H1 (cell line): ENCODE measurements at regions of chr2 and their contacts with region 1.

Region 1: GRCh38 chr2:10832203-10832936 is 19.8 kb upstream of the PDIA6 start:
- DNase-seq: peak; percentile 70 to 96
- H3K4me3 ChIP-seq: peak overlapping the region in 2 of 4 experiments; percentile 36 to 52; a peak in 4 of 8 replicates
- H3K27ac ChIP-seq: no peak overlapping the region
- H3K4me1 ChIP-seq: peaks cover 0 to 7% (median 4%) of the 10 kb centered on the region in 4 experiments; a peak in 5 of 7 replicates
- H3K27me3 ChIP-seq: peaks cover 0 to 7% (median 4%) of the 10 kb centered on the region in 4 experiments; a peak in 3 of 7 replicates
- CTCF ChIP-seq: peak; percentile 95 to 98 (median 97)
- EP300 ChIP-seq: no peak
- POLR2A ChIP-seq: no peak
- RAD21 ChIP-seq: peak; percentile 95 to 97

Region 2: GRCh38 chr2:10798783-10799182 is 33.6 kb before region 1 on chr2:
- CTCF ChIA-PET with region 1: interaction called, 13 read pairs
- POLR2A ChIA-PET with region 1: no interaction called
- DNase-seq: no peak
- H3K4me3 ChIP-seq: no peak overlapping the region
- H3K27ac ChIP-seq: no peak overlapping the region
- H3K4me1 ChIP-seq: no peaks in the 10 kb centered on the region
- H3K27me3 ChIP-seq: no peaks in the 10 kb centered on the region
- CTCF ChIP-seq: peak in 2 of 3 experiments; percentile 29 to 40; a peak in 3 of 4 replicates
- EP300 ChIP-seq: no peak
- POLR2A ChIP-seq: no peak
- RAD21 ChIP-seq: peak in 1 of 2 experiments; percentile 16; a peak in 1 of 4 replicates

Region 3: GRCh38 chr2:10844097-10844496 is 11.7 kb after region 1 on chr2:
- CTCF ChIA-PET with region 1: interaction called, 23 read pairs
- POLR2A ChIA-PET with region 1: interaction called, 5 read pairs
- DNase-seq: peak; percentile 49 to 79
- H3K4me3 ChIP-seq: peak overlapping the region in 2 of 4 experiments; percentile 2 to 5; a peak in 1 of 8 replicates
- H3K27ac ChIP-seq: no peak overlapping the region
- H3K4me1 ChIP-seq: peaks cover 0 to 6% (median 1%) of the 10 kb centered on the region in 4 experiments; a peak in 5 of 7 replicates
- H3K27me3 ChIP-seq: no peaks in the 10 kb centered on the region
- CTCF ChIP-seq: no peak
- EP300 ChIP-seq: 0 out of 3 replicates have a peak, but pooled peaks of 1 of the 2 experiments have one; percentile 22
- POLR2A ChIP-seq: no peak
- RAD21 ChIP-seq: 0 out of 4 replicates have a peak, but pooled peaks of 1 of the 2 experiments have one; percentile 6

Region 4: GRCh38 chr2:10883801-10884478 is 51.6 kb after region 1 on chr2:
- CTCF ChIA-PET with region 1: interaction called, 21 read pairs
- POLR2A ChIA-PET with region 1: no interaction called
- DNase-seq: no peak
- H3K4me3 ChIP-seq: no peak overlapping the region
- H3K27ac ChIP-seq: no peak overlapping the region
- H3K4me1 ChIP-seq: peaks cover 2 to 23% (median 11%) of the 10 kb centered on the region in 4 experiments; a peak in 5 of 7 replicates
- H3K27me3 ChIP-seq: no peaks in the 10 kb centered on the region
- CTCF ChIP-seq: no peak
- EP300 ChIP-seq: no peak
- POLR2A ChIP-seq: no peak
- RAD21 ChIP-seq: no peak

Region 5: GRCh38 chr2:10918661-10919409 is 86.5 kb after region 1 on chr2:
- CTCF ChIA-PET with region 1: interaction called, 234 read pairs
- POLR2A ChIA-PET with region 1: no interaction called
- DNase-seq: no peak
- H3K4me3 ChIP-seq: no peak overlapping the region
- H3K27ac ChIP-seq: no peak overlapping the region
- H3K4me1 ChIP-seq: peaks cover 0 to 28% (median 18%) of the 10 kb centered on the region in 4 experiments; a peak in 6 of 7 replicates
- H3K27me3 ChIP-seq: peaks cover 0 to 11% (median 3%) of the 10 kb centered on the region in 4 experiments; a peak in 5 of 7 replicates
- CTCF ChIP-seq: no peak
- EP300 ChIP-seq: no peak
- POLR2A ChIP-seq: no peak
- RAD21 ChIP-seq: no peak

Region 6: DNA sequence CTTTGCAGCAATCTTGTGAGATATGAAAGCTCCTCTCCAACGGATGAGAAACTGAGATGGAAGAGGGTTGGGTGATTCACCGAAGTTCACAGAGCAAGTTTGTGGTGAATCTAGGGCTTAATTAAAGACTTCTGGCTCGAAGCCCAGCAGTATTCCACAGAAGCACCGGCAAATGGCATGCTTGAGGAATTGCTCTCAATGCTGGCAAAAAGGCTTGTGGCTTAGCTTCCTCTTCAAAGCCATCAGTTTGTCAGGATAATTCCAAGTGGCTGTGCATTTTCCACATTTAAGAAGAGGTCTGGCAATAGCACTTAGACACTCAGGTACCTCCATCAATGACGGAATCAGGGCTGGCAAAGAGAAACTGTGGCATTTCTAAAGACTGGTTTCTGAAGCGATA is 224.2 kb after region 1 on chr2:
- CTCF ChIA-PET with region 1: interaction called, 11 read pairs
- POLR2A ChIA-PET with region 1: no interaction called
- DNase-seq: no peak
- H3K4me3 ChIP-seq: no peak overlapping the region
- H3K27ac ChIP-seq: no peak overlapping the region
- H3K4me1 ChIP-seq: no peaks in the 10 kb centered on the region
- H3K27me3 ChIP-seq: no peaks in the 10 kb centered on the region
- CTCF ChIP-seq: no peak
- EP300 ChIP-seq: no peak
- POLR2A ChIP-seq: no peak
- RAD21 ChIP-seq: no peak

Region 7: GRCh38 chr2:11124503-11125068 is 292.2 kb after region 1 on chr2:
- CTCF ChIA-PET with region 1: interaction called, 209 read pairs
- POLR2A ChIA-PET with region 1: interaction called, 6 read pairs
- DNase-seq: peak; percentile 47 to 97
- H3K4me3 ChIP-seq: no peak overlapping the region
- H3K27ac ChIP-seq: no peak overlapping the region
- H3K4me1 ChIP-seq: peaks cover 0 to 4% (median 0%) of the 10 kb centered on the region in 4 experiments; a peak in 5 of 7 replicates
- H3K27me3 ChIP-seq: peaks cover 0 to 3% (median 1%) of the 10 kb centered on the region in 4 experiments; a peak in 4 of 7 replicates
- CTCF ChIP-seq: peak; percentile 94 to 98 (median 94)
- EP300 ChIP-seq: no peak
- POLR2A ChIP-seq: no peak
- RAD21 ChIP-seq: peak; percentile 96